HEK293 (cell line): ENCODE measurements at regions of chrX and their contacts with region 1.

Region 1: DNA sequence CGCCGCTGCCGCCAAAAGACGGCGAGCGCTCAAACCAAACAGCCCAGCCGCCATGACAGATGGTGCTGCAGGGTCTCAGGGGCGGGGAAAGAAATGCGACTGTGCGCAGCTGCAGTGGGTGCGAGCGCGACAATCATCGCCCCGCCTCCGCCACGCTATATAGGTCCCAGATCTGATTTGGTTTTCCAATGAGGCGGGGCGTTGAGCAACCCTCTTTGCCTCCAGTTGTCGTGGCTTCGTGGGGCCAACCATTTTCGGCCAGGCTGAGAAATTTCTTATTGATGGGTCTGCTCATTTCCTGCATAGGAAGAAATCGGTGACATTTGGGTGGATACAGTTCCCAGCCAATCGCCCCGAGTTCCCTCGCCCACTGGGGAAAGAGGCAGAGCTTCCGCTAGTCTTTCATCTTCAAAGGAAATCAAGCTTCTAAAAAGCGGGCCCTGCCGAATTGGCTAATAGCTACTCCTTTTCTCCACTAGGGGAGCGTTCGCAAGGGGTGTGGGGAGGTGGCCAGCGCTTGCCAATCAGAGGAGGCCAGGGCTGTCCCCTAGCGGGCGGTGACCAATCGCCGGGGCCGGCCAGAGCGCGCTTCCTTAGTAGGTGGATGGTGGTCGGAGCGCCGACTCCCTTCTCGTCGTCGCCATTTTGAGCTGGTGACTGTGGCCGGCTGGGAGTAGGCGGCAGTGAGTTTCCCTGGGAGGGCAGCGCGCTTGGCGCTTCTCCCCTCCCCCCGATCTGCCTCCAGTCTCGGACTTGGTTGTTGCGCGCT is at the starts of genes NDUFB11 and RBM10:
- H3K4me3 ChIP-seq: peak within 1 kb of the TSS; percentile 90
- H3K27ac ChIP-seq: peak within 1 kb of the TSS; percentile 82
- H3K4me1 ChIP-seq: 0 out of 2 replicates have a peak, but pooled peaks cover 3% of the 10 kb centered on the region
- CTCF ChIP-seq: peak; percentile 88

Region 2: GRCh38 chrX:47129157-47129898 is 15.5 kb before region 1 on chrX:
- CTCF ChIA-PET with region 1: interaction called, 13 read pairs
- POLR2A ChIA-PET with region 1: interaction called, 29 read pairs
- H3K4me3 ChIP-seq: peak overlapping the region; percentile 50
- H3K27ac ChIP-seq: peak overlapping the region; percentile 91
- H3K4me1 ChIP-seq: no peaks in the 10 kb centered on the region
- CTCF ChIP-seq: no peak

Region 3: DNA sequence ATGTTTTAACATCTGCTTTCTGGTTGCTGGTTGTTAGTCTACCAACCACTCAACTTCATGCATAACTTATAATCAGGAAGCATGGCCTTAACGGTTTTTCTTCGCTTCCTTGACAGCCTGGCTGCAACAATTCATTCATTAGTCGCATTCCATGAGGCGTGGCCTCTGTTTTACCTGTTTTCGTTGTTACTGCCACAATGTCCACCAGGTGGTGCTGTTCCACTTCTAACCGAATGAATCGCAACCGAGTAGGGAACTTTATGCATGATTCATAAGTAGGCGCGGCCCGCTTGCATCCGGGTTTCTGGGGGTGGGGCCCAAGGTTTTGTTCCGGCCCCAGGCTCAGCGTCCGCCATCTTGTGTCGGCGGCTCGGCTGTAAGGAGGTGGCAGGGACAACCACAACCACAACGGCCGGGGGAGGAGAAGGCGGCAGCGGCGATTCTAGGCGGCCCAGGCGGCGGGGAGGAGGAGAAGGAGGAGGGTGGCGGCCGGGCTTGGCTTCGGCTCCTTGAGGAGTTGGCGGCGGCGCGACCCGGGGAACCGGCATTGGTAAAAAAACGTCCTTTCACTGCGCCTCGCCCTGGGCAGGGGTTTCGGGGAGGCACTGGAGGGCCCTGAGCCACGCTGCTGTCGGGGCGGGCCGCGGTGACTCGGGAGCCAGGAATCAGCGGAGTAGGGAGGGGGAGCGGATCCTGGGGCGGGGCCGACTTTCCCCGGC is 48.8 kb after region 1 on chrX and contains the start of gene UBA1:
- CTCF ChIA-PET with region 1: interaction called, 3 read pairs
- POLR2A ChIA-PET with region 1: interaction called, 26 read pairs
- H3K4me3 ChIP-seq: peak within 1 kb of the TSS; percentile 97
- H3K27ac ChIP-seq: peak within 1 kb of the TSS; percentile 90
- H3K4me1 ChIP-seq: peaks cover 10% of the 10 kb centered on the region; the same call in 1 of the 2 replicates
- CTCF ChIP-seq: peak; percentile 80

Region 4: GRCh38 chrX:47224291-47225290 is 79.8 kb after region 1 on chrX:
- CTCF ChIA-PET with region 1: no interaction called
- POLR2A ChIA-PET with region 1: no interaction called
- H3K4me3 ChIP-seq: no peak overlapping the region
- H3K27ac ChIP-seq: no peak overlapping the region
- H3K4me1 ChIP-seq: peaks cover 4% of the 10 kb centered on the region; the same call in 1 of the 2 replicates
- CTCF ChIP-seq: no peak